ENCODE measurements at regions of chr17 and their contacts with region 1.

Region 1: GRCh38 chr17:7045909-7046724 is 2.2 kb upstream of the SLC16A11 start:
- DNase-seq: peak; percentile 53
- H3K4me3 ChIP-seq: peak overlapping the region in 1 of 2 experiments; percentile 14; a peak in 1 of 4 replicates
- H3K27ac ChIP-seq: no peak overlapping the region
- H3K4me1 ChIP-seq: peaks cover 0 to 22% of the 10 kb centered on the region in 2 experiments; a peak in 1 of 4 replicates
- H3K27me3 ChIP-seq: peaks cover 31% of the 10 kb centered on the region; the same call in 1 of the 2 replicates
- CTCF ChIP-seq: peak; percentile 92
- EP300 ChIP-seq: no peak
- RAD21 ChIP-seq: peak; percentile 91

Region 2: GRCh38 chr17:6981426-6981825 is 64.7 kb before region 1 on chr17:
- CTCF ChIA-PET with region 1: no interaction called
- POLR2A ChIA-PET with region 1: no interaction called
- DNase-seq: no peak
- H3K4me3 ChIP-seq: no peak overlapping the region
- H3K27ac ChIP-seq: no peak overlapping the region
- H3K4me1 ChIP-seq: no peaks in the 10 kb centered on the region
- H3K27me3 ChIP-seq: no peaks in the 10 kb centered on the region
- CTCF ChIP-seq: no peak
- EP300 ChIP-seq: no peak
- RAD21 ChIP-seq: no peak

Region 3: DNA sequence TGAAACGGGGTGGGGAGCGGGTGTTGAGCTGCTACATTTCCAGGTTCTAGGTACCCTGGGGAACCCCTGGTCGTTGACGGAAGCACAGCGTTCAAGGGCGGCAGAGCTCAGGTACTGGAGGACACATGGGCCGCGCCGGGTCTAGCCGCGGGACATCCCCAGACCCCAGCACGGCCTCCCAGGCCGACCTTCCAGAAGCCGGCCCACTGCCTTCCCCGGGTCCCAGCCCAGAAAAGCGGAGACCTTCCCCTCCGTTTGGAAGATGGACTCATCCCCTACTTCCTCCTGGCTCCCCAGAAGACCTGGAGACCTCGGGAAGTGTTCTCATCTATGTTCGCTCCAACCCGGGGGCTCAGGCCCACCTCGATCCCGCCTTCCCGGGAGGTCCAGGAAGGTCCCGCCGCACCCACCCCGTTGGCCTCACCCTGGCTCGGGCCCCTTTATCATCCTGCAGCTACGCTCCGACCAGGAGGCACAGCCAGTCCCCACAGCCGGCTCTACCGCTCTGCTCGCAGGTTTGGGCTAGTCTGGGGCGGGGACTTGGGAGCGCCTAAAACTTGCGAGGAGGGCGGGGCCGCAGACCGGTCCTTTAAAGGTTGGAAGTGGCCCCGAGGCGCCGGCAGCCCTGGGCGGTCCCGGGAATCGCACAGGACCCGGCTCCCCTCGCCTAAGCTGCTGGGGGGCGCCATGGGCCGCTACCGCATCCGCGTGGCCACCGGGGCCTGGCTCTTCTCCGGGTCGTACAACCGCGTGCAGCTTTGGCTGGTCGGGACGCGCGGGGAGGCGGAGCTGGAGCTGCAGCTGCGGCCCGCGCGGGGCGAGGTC is 50.5 kb before region 1 on chr17 and contains the start of gene ALOX12:
- CTCF ChIA-PET with region 1: no interaction called
- POLR2A ChIA-PET with region 1: no interaction called
- DNase-seq: no peak
- H3K4me3 ChIP-seq: no peak within 1 kb of the TSS
- H3K27ac ChIP-seq: no peak within 1 kb of the TSS
- H3K4me1 ChIP-seq: peaks cover 0 to 3% of the 10 kb centered on the region in 2 experiments; a peak in 1 of 4 replicates
- H3K27me3 ChIP-seq: no peaks in the 10 kb centered on the region
- CTCF ChIP-seq: no peak
- EP300 ChIP-seq: no peak
- RAD21 ChIP-seq: no peak
- polyA plus RNA-seq, gene ALOX12: not detected in 2 replicates

Region 4: DNA sequence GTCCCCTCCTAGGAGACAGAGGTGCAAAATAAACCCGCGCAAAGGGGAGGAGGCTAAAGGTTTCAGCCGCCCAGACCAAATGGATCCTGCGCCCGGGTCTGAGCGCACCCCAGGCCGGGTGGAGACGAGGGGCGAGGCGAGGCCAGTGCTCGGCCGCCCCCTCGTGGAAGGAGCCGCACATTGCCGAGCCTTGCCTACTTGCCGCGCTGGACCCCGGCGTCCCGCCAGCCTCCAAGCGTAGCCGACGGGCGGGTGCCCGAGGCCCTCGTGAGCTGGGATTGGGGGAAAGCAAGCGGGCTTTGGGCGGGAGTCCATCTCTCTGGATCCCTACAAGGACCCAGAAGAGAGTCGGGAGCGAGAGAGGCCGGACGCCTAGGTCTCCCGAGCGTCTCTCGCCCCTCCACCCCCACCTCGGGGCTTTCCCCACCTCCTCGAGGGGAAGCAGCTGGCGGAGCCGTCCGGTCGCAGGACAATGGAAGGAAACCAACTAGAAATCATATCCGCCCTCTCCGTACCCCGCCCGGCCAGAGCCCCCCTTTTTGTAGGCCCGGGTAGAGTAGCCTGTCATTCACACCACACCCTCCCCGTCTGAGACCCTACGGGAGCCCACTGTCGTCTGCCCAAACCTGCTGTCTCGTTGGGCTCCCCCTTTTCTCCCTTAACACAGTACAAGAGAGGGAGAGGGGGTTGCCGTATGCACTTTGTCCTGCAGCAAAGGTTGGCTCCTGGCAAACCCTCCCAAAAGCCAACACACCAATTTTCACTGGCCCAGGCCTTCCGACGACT is 23.9 kb before region 1 on chr17:
- CTCF ChIA-PET with region 1: interaction called, 31 read pairs
- POLR2A ChIA-PET with region 1: no interaction called
- DNase-seq: peak; percentile 92
- H3K4me3 ChIP-seq: peak overlapping the region in 1 of 2 experiments; percentile 47; a peak in 2 of 4 replicates
- H3K27ac ChIP-seq: no peak overlapping the region
- H3K4me1 ChIP-seq: peaks cover 5 to 30% of the 10 kb centered on the region in 2 experiments; a peak in 2 of 4 replicates
- H3K27me3 ChIP-seq: no peaks in the 10 kb centered on the region
- CTCF ChIP-seq: peak; percentile 81
- EP300 ChIP-seq: no peak
- RAD21 ChIP-seq: peak; percentile 74

Region 5: DNA sequence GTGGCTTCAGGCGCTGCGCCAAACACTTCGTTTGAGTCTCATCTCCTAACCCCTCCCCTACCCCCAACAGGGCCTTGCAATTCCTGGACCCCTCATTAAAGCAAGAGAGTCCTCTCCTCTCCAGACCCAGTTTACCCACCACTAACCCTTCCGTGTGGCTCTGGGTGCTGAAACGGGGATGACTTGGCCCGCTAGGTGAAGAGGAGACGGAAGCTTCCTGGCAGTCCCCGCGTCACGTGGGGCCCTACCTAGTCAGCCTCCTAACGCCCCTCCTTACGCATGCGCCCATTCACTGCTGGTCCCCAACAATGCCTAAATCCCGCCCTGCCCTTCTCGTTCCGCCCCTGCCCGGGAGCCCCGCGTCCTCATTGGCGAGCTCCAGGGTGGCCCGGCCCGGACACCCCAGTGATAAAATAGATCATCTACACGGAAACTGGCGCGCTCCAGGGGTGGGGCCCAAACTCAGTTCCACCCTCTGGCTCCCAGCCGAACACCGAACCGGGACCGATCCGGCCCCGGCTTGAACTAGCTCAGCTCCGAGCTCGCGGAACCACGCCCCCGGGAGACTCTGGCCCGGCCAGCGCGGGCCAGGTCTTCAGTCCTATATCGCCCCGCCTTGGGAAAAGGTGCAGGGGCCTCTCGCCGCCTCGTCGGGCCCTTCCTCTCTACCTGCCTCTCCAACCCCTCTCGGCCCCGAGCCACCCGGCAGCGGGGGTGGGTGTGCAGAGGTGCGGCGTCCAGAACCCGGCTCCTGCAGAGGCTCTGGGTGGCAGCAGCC is 10.3 kb before region 1 on chr17 and contains the start of gene SLC16A13:
- CTCF ChIA-PET with region 1: interaction called, 14 read pairs
- POLR2A ChIA-PET with region 1: interaction called, 7 read pairs
- DNase-seq: peak; percentile 99
- H3K4me3 ChIP-seq: peak within 1 kb of the TSS; percentile 76 to 80
- H3K27ac ChIP-seq: peak within 1 kb of the TSS; percentile 45 to 72; a peak in 3 of 4 replicates
- H3K4me1 ChIP-seq: peaks cover 4 to 11% of the 10 kb centered on the region in 2 experiments; a peak in 2 of 4 replicates
- H3K27me3 ChIP-seq: no peaks in the 10 kb centered on the region
- CTCF ChIP-seq: no peak
- EP300 ChIP-seq: no peak
- RAD21 ChIP-seq: no peak
- polyA plus RNA-seq, gene SLC16A13: 2.5 and 3.9 TPM in 2 replicates

Region 6: GRCh38 chr17:7101531-7101930 is 55.4 kb after region 1 on chr17:
- CTCF ChIA-PET with region 1: interaction called, 16 read pairs
- POLR2A ChIA-PET with region 1: no interaction called
- DNase-seq: no peak
- H3K4me3 ChIP-seq: no peak overlapping the region
- H3K27ac ChIP-seq: no peak overlapping the region
- H3K4me1 ChIP-seq: no peaks in the 10 kb centered on the region
- H3K27me3 ChIP-seq: peaks cover 80% of the 10 kb centered on the region
- CTCF ChIP-seq: no peak
- EP300 ChIP-seq: no peak
- RAD21 ChIP-seq: no peak

Region 7: DNA sequence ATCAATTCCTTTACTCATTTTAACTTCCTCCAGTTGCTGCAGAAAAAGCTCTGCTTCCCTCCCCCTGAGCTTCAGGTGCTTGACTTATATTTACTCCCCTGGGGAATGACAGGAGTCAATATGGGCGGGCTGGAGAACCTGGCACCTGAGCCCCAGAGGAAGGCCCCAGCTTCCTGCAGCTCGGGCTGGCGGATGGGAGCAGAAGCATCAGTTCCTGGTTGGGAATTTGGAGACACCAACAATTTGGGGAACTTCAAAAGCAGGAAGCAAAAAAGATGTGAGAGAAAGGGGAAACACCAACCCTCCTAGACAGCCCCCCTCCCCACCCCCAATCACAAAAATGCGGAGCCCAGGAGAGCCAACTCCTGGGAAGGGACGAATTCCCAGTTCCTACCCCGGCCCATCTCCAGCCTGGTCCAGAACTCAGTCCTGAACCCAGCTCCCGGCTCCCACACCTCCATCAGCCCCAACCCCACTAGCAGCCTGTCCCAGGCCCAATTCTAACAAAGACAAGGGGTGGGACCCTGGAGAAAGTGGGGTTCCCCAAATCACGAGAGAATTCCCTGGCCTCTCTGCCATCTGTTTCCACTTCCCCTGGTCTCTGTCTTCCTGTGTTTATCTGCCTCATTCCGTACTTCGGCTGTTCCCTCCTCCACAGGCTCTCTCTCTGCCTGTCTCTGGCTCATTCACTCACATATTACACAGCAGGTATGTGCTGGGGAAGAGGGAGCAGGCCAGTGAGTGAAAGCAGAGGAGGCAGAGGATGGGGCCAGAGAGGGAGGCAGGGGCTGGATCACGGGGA is 84.7 kb after region 1 on chr17:
- CTCF ChIA-PET with region 1: interaction called, 502 read pairs
- POLR2A ChIA-PET with region 1: no interaction called
- DNase-seq: no peak
- H3K4me3 ChIP-seq: no peak overlapping the region
- H3K27ac ChIP-seq: no peak overlapping the region
- H3K4me1 ChIP-seq: no peaks in the 10 kb centered on the region
- H3K27me3 ChIP-seq: peaks cover 81% of the 10 kb centered on the region
- CTCF ChIP-seq: no peak
- EP300 ChIP-seq: no peak
- RAD21 ChIP-seq: no peak

Region 8: DNA sequence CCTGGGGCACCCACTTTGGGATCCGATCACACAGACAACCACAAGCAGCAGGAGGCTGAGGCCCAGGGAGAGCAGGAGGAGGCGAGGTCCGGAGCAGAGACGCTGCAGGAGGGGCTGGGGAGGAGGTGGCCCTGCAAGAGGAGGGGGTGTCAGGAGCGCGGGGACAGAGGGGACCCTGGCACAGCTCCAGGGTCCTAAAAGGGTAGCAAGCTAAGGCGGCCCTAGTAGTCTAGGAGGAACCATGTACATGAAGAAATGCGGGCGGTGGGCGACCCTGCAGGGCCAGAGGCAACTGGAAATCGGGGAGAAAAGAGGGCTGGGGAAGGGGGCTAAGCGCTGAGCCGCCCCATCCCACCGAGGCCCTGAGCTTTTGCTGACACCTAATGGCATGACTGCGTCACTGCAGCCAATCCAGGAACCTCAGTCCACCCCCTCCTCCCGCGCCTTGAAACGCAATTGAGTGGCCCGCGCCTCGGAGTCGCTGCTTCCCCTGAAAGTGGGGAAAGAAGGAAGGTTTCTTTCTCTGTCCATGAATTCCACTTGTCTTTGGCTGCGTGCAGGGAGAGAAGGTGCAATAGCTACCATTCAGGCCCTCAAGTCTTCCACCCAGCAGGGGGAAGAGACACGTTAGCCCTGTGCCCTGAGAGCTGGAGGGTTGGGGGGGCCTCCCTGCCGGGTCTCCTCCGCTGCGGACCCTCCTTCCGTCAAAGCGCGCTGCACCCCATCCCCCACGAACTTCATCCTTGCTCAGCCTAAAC is 131.3 kb after region 1 on chr17:
- CTCF ChIA-PET with region 1: interaction called, 217 read pairs
- POLR2A ChIA-PET with region 1: no interaction called
- DNase-seq: peak; percentile 95
- H3K4me3 ChIP-seq: peak overlapping the region; percentile 38 to 56
- H3K27ac ChIP-seq: no peak overlapping the region
- H3K4me1 ChIP-seq: peaks cover 0 to 8% of the 10 kb centered on the region in 2 experiments; a peak in 1 of 4 replicates
- H3K27me3 ChIP-seq: no peaks in the 10 kb centered on the region
- CTCF ChIP-seq: peak; percentile 85
- EP300 ChIP-seq: no peak
- RAD21 ChIP-seq: peak; percentile 81

Measured in SK-N-SH (cell line).